Right ventricle myocardium inferior (tissue), 1 donor: ENCODE measurements at regions of chr7 and their contacts with region 1.

Region 1: GRCh38 chr7:143391462-143392404 is 10.6 kb downstream of the ZYX start:
- DNase-seq: peak; percentile 79
- ATAC-seq: peak; percentile 81

Region 2: GRCh38 chr7:143214789-143215679 is 176.7 kb before region 1 on chr7:
- intact Hi-C with region 1: no loop called
- DNase-seq: no peak
- ATAC-seq: peak; percentile 67

Region 3: GRCh38 chr7:143380255-143380645 is 11.5 kb before region 1 on chr7:
- intact Hi-C with region 1: loop called (anchors 1 kb)
- DNase-seq: peak; percentile 93
- ATAC-seq: peak; percentile 82

Region 4: DNA sequence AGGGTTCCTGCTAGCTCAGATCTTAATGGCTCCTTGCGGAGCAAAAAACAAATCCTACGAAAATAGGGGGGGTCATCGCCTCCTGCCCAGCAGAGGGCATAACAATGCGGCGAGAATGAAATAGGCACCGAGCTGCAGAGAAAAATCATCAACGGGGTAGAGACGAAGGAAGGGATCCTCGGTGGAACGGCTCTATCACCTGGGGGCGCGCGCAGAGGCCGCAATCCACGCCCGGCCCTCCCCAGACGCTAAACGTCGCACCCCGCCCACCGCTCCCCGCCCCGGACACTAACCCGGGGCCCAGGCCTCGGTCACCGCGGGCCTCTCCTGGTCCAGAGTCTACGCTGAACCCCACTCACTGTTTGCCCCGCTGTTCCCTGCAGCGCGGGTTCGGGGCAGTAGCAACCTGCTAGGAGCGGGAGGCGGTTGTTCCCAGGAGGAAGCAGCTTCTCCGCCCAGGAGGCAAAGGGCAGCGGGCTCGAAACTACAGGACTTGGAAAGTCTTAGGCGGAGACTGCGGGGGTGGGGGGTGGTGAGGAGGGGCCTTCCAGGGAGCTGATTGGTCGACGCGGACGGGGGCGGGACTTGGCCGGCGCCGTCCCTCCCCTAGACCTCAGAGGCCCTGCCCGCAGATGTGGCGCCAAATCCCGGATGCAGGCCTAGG is 510.1 kb after region 1 on chr7 and contains the start of gene TCAF1:
- intact Hi-C with region 1: loop called (anchors 10 kb)
- DNase-seq: peak; percentile 96
- ATAC-seq: peak; percentile 99
- total RNA-seq, gene TCAF1: 38.7 TPM